ENCODE measurements at regions of chr1 and their contacts with region 1.

Region 1: GRCh38 chr1:65687428-65688214 is 105.1 kb upstream of the PDE4B start:
- DNase-seq: peak; percentile 81
- H3K4me3 Mint-ChIP-seq: no peak overlapping the region
- H3K27ac Mint-ChIP-seq: no peak overlapping the region
- H3K4me1 Mint-ChIP-seq: no peaks in the 10 kb centered on the region
- H3K27me3 Mint-ChIP-seq: no peaks in the 10 kb centered on the region
- CTCF ChIP-seq: peak; percentile 92

Region 2: GRCh38 chr1:65067491-65068201 is 620.0 kb before region 1 on chr1:
- CTCF ChIA-PET with region 1: interaction called, 20 read pairs
- POLR2A ChIA-PET with region 1: no interaction called
- intact Hi-C with region 1: no loop called
- DNase-seq: peak; percentile 70
- H3K4me3 Mint-ChIP-seq: peak overlapping the region; percentile 77
- H3K27ac Mint-ChIP-seq: peak overlapping the region; percentile 92
- H3K4me1 Mint-ChIP-seq: peaks cover 13% of the 10 kb centered on the region
- H3K27me3 Mint-ChIP-seq: no peaks in the 10 kb centered on the region
- CTCF ChIP-seq: no peak

Region 3: GRCh38 chr1:65214340-65215027 is 473.1 kb before region 1 on chr1:
- CTCF ChIA-PET with region 1: interaction called, 47 read pairs
- POLR2A ChIA-PET with region 1: no interaction called
- intact Hi-C with region 1: loop called (anchors 1 kb)
- DNase-seq: no peak
- H3K4me3 Mint-ChIP-seq: no peak overlapping the region
- H3K27ac Mint-ChIP-seq: no peak overlapping the region
- H3K4me1 Mint-ChIP-seq: no peaks in the 10 kb centered on the region
- H3K27me3 Mint-ChIP-seq: no peaks in the 10 kb centered on the region
- CTCF ChIP-seq: no peak

Region 4: DNA sequence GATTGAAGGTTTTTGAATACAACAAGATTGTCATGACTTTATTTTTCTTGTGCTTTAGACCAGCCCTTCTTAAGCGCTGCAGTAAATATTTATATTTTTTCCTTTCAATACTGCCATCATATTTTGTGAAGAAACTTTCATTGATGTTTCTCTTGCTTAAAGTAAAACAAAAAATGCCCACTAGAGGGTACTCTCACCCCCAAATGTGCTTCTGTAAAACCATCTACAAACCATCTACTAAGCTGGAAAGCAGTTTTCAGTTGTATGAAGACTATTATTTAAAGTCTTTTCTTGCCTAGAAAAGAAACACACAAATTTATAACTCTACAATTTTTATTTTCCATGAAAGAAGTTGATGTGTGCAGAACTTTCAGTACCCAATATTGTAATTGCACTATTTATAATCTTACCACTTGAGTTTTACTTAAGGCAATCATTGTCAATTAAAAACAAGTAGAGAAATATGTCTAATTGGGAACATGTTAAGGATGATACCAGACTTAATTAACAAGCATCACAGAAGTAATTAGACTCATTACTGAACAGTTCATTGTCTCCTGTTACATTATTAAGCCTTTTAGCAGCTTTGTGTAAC is 256.4 kb before region 1 on chr1:
- CTCF ChIA-PET with region 1: interaction called, 12 read pairs
- POLR2A ChIA-PET with region 1: interaction called, 7 read pairs
- intact Hi-C with region 1: loop called (anchors 1 kb)
- DNase-seq: peak; percentile 60
- H3K4me3 Mint-ChIP-seq: peak overlapping the region; percentile 76
- H3K27ac Mint-ChIP-seq: peak overlapping the region; percentile 93
- H3K4me1 Mint-ChIP-seq: peaks cover 44% of the 10 kb centered on the region
- H3K27me3 Mint-ChIP-seq: no peaks in the 10 kb centered on the region
- CTCF ChIP-seq: peak; percentile 44

Region 5: GRCh38 chr1:65668368-65668767 is 19.3 kb before region 1 on chr1:
- CTCF ChIA-PET with region 1: interaction called, 12 read pairs
- POLR2A ChIA-PET with region 1: no interaction called
- intact Hi-C with region 1: no loop called
- DNase-seq: no peak
- H3K4me3 Mint-ChIP-seq: no peak overlapping the region
- H3K27ac Mint-ChIP-seq: no peak overlapping the region
- H3K4me1 Mint-ChIP-seq: no peaks in the 10 kb centered on the region
- H3K27me3 Mint-ChIP-seq: peaks cover 39% of the 10 kb centered on the region
- CTCF ChIP-seq: no peak

Region 6: GRCh38 chr1:65992165-65992840 is 304.7 kb after region 1 on chr1:
- CTCF ChIA-PET with region 1: no interaction called
- POLR2A ChIA-PET with region 1: no interaction called
- intact Hi-C with region 1: no loop called
- DNase-seq: no peak
- H3K4me3 Mint-ChIP-seq: no peak overlapping the region
- H3K27ac Mint-ChIP-seq: no peak overlapping the region
- H3K4me1 Mint-ChIP-seq: no peaks in the 10 kb centered on the region
- H3K27me3 Mint-ChIP-seq: peaks cover 77% of the 10 kb centered on the region
- CTCF ChIP-seq: no peak